Left ventricle myocardium superior (tissue), 1 donor: ENCODE measurements at regions of chr5 and their contacts with region 1.

Region 1: DNA sequence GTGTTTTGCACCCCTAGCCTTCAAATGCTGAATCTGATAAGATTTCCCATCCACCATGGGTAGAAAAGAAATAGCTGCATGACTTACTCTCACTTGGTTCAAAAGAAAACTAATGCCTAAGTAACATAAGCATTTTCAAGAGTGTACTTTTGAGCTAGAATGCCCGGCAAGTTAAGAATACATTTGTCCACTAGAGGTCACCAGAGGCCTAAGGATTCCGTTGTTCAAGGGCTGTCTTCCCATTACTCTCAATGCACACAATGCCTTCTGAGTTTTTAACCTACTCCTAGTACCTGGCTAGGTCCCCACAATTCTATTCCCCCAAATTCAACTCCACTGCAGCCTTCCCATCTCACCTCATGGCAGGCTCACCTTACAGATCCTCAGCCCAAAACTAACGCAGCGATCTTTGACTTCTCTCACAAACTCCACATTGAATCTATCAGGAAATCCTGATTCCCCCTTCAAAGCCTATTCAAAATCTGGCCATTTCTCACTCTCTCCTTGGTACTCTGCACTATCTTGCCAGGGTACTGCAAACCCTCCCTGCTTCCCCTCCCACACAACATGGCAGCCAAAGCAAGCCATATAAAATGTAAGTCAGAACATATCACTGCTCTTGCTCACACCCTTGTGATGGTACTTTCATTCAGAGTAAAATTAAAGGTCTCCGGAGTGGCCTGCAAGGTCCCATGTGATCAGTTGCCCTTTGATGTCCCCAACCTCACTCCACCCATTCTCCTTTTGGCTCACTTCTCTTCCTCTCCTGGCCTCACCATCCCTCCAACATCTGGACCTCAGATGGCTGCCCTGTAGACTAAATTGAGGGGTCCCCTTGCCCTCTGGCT is 13.4 kb downstream of the OXCT1 start:
- DNase-seq: no peak
- ATAC-seq: peak; percentile 91

Region 2: GRCh38 chr5:41924872-41925554 is 68.1 kb after region 1 on chr5 and contains the start of gene FBXO4:
- intact Hi-C with region 1: loop called (anchors 10 kb)
- DNase-seq: peak; percentile 94
- ATAC-seq: peak; percentile 99
- total RNA-seq, gene FBXO4: 3.1 TPM

Region 3: DNA sequence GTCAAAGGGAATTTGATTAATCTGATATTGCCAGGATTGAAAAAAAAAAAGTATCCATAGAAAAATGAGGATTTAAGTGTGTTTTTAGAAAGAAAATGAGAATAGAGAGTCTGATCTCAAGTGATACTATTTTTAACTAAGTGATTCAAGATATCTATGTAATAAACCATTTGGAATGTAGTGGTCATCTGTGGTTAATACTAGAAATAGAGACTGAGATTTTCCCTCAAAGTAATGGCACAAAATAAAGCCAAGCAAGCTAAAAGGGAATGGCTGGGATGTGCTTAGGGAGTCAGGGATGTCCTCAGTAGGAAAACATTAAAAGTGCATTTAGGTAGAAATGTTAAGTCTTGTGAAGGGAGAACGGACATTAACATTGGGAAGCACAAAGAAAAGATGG is 158.8 kb after region 1 on chr5:
- intact Hi-C with region 1: no loop called
- DNase-seq: no peak
- ATAC-seq: no peak

Region 4: DNA sequence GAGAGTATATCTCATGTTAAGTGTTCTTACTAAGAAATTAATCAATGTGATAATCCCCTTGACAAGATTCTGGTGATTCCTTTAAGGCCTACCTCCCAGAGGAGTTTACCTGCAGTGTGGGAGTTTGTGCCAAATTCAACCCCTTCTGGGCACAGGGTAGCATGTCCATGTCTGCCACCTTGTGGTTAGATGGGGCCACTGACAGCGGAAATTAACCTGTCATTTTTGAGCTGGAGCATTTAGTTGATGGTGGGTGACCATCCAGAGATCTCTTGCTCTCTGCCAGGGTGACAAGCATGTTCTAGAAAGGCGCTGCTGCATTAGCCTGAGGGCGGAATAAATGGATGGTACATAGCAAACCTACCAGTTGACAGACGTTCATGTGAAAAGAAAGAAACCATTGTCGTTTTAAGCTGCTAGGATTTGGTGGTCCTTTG is 200.4 kb after region 1 on chr5:
- intact Hi-C with region 1: loop called (anchors 5 kb)
- DNase-seq: peak; percentile 27
- ATAC-seq: peak; percentile 32

Region 5: GRCh38 chr5:42767491-42768105 is 910.7 kb after region 1 on chr5:
- intact Hi-C with region 1: loop called (anchors 10 kb)
- DNase-seq: no peak
- ATAC-seq: peak; percentile 26